GM10248 (cell line): ENCODE measurements at regions of chr12 and their contacts with region 1.

Region 1: GRCh38 chr12:117836999-117837736 is 131.6 kb downstream of the KSR2 start:
- DNase-seq: peak; percentile 73
- CTCF ChIP-seq: peak; percentile 95

Region 2: DNA sequence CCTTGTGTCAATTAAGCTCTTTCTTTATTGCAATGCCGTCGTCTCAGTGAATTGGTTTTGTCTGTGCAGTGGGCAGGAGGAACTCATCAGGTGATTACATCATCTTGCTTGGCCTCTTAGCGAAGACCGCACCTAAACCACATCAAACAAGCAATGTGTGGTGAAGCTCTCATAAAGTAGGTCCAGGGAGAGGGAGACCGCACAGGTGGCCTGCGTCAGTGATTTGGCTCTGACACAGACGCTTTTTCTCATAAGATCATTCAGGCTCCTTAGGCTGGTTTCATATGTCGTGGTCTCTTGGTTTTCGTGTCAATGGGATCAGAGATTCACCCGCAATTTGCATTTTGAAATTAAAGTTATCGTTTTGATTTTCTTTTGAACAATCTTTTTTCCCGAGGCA is 731.3 kb before region 1 on chr12:
- CTCF ChIA-PET with region 1: no interaction called
- POLR2A ChIA-PET with region 1: no interaction called
- DNase-seq: no peak
- CTCF ChIP-seq: no peak

Region 3: GRCh38 chr12:117236456-117237001 is 600.6 kb before region 1 on chr12:
- CTCF ChIA-PET with region 1: interaction called, 41 read pairs
- POLR2A ChIA-PET with region 1: no interaction called
- DNase-seq: peak; percentile 75
- CTCF ChIP-seq: peak; percentile 68

Region 4: GRCh38 chr12:117377744-117378143 is 459.4 kb before region 1 on chr12:
- CTCF ChIA-PET with region 1: interaction called, 11 read pairs
- POLR2A ChIA-PET with region 1: no interaction called
- DNase-seq: no peak
- CTCF ChIP-seq: no peak

Region 5: GRCh38 chr12:117803001-117803400 is 34.2 kb before region 1 on chr12:
- CTCF ChIA-PET with region 1: interaction called, 10 read pairs
- POLR2A ChIA-PET with region 1: no interaction called
- DNase-seq: no peak
- CTCF ChIP-seq: no peak

Region 6: DNA sequence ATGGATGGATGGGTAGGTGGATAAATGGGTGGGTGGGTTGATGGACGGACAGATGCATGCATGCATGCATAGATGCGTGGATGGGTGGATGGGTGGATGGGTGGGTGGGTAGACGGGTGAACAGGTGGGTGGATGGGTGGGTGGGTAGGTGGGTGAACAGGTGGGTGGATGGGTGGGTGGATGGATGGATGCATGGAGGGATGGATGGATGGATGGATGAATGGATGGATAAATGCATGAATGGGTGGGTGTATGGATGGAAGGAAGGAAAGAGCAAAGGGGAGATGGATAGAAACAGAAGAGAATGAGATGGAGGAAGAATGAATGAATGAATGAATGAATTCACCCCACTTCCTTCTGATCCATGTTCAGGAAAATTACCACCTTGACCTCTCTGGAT is 11.3 kb before region 1 on chr12:
- CTCF ChIA-PET with region 1: interaction called, 19 read pairs
- POLR2A ChIA-PET with region 1: no interaction called
- DNase-seq: no peak
- CTCF ChIP-seq: no peak

Region 7: GRCh38 chr12:117857632-117858612 is 20.8 kb after region 1 on chr12:
- CTCF ChIA-PET with region 1: interaction called, 28 read pairs
- POLR2A ChIA-PET with region 1: no interaction called
- DNase-seq: peak; percentile 77
- CTCF ChIP-seq: peak; percentile 51

Region 8: GRCh38 chr12:117919479-117919878 is 82.3 kb after region 1 on chr12:
- CTCF ChIA-PET with region 1: no interaction called
- POLR2A ChIA-PET with region 1: no interaction called
- DNase-seq: no peak
- CTCF ChIP-seq: no peak